Colonic mucosa (tissue), 4 donors: ENCODE measurements at regions of chr1 and their contacts with region 1.

Region 1: GRCh38 chr1:23184212-23184934 is 15.7 kb upstream of the LUZP1 start:
- DNase-seq: no peak
- H3K4me3 ChIP-seq: peak overlapping the region; percentile 3
- H3K27ac ChIP-seq: no peak overlapping the region
- H3K4me1 ChIP-seq: no peaks in the 10 kb centered on the region
- H3K27me3 ChIP-seq: no peaks in the 10 kb centered on the region
- CTCF ChIP-seq: peak; percentile 50

Region 2: GRCh38 chr1:22976461-22977243 is 207.7 kb before region 1 on chr1:
- intact Hi-C with region 1: loop called (anchors 5 kb)
- DNase-seq: peak; percentile 71
- H3K4me3 ChIP-seq: no peak overlapping the region
- H3K27ac ChIP-seq: no peak overlapping the region
- H3K4me1 ChIP-seq: no peaks in the 10 kb centered on the region
- H3K27me3 ChIP-seq: no peaks in the 10 kb centered on the region
- CTCF ChIP-seq: peak; percentile 64

Region 3: DNA sequence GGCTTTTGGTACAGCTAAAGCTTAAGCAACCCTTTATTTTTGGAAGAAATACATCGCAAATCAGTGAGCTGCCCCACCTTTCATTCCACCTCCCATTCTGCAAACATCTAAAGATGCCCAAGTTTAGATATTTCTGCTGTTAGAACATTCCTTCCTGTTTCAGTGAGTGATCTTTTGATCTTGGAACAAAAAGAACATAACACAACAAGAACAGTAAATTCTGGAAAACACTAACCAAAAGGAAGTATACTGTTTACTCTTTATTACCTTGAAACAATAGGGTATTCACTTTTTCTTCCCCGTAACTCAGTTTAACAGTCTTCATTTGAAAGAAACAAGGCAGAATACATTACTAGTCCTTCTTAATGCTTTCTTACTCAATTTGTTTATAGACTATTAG is 119.2 kb after region 1 on chr1:
- intact Hi-C with region 1: no loop called
- DNase-seq: no peak
- H3K4me3 ChIP-seq: no peak overlapping the region
- H3K27ac ChIP-seq: no peak overlapping the region
- H3K4me1 ChIP-seq: no peaks in the 10 kb centered on the region
- H3K27me3 ChIP-seq: no peaks in the 10 kb centered on the region
- CTCF ChIP-seq: no peak

Region 4: GRCh38 chr1:23484253-23485001 is 300.1 kb after region 1 on chr1:
- intact Hi-C with region 1: no loop called
- DNase-seq: peak; percentile 97
- H3K4me3 ChIP-seq: peak overlapping the region; percentile 81
- H3K27ac ChIP-seq: peak overlapping the region; percentile 68
- H3K4me1 ChIP-seq: no peaks in the 10 kb centered on the region
- H3K27me3 ChIP-seq: peaks cover 2% of the 10 kb centered on the region
- CTCF ChIP-seq: no peak